Mammary epithelial cell (primary cell): ENCODE measurements at regions of chr15 and their contacts with region 1.

Region 1: DNA sequence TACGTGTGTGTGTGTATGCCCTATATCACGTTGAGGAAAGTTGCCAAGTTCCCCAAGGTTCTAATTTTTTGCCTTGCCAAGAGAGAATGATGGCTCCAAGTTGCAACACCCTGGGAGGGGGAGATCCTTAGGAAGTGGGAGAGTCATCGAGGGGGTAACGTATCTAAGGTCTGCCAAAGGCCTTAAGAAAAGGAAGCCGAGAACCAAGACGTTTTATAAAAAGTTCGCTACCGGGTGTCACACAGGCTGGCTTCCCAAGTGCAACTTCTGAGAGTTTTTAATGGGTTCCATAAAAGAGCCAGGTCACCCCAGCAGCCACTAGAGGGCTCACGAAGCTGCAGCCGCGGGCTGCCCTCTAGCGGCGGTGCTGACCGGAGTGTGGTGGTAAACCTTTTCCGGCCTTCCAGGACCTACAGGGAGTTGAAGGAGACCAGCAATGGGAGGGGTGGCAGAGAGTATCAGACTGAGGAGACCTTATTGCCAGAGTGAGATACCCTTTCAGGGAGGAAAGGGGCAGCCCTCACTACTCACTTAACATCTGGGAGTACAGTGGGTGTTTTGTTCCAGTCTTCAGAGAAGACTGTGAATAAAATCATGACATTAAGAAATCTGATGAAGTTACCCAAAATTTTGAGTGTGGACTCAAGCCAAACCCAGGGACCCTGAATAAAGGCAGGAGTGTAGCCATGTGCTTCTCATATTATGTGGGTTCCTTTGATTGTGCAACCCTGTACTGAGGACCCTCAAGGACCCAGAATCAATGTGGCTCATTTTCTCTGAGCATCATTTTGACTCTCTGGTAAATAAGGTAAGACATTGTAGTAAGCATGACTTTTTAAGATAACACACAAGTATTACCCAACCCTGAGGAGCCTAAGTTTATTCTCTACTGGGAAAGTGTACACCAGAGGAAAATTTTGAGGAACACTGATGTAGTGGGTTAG is 2.5 kb upstream of the RFX7 start:
- DNase-seq: peak; percentile 79
- H3K4me3 ChIP-seq: peak overlapping the region; percentile 27 to 43 (median 34)
- H3K27ac ChIP-seq: peak overlapping the region; percentile 19
- H3K4me1 ChIP-seq: peaks cover 17% of the 10 kb centered on the region
- H3K27me3 ChIP-seq: no peaks in the 10 kb centered on the region
- CTCF ChIP-seq: peak; percentile 100

Region 2: GRCh38 chr15:55917881-55918296 is 328.3 kb before region 1 on chr15:
- CTCF ChIA-PET with region 1: no interaction called
- dilution Hi-C with region 1: no loop called
- in situ Hi-C with region 1: no loop called
- intact Hi-C with region 1: loop called (anchors 5 kb)
- DNase-seq: peak; percentile 86
- H3K4me3 ChIP-seq: peak overlapping the region in 1 of 3 experiments; percentile 25
- H3K27ac ChIP-seq: peak overlapping the region; percentile 92
- H3K4me1 ChIP-seq: peaks cover 28% of the 10 kb centered on the region
- H3K27me3 ChIP-seq: no peaks in the 10 kb centered on the region
- CTCF ChIP-seq: peak; percentile 65 to 67

Region 3: DNA sequence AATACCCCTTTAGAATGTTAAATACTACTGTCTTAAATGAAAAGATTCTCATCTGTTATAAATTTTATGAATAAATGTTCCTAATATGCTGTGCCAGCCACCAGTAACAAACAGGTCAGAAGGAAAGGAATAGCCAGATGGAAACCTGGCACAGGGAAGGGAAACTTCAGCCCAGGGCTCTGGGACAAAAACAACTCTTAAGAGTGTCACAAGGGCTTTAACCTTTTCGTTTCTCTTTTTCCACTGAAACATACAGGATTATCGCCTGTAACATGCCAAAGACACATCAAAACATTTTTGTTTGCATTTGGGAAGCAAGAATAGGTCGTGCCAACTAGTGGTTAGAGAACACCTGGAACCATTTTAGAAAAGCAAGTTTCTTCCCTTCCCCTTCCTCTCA is 143.7 kb before region 1 on chr15:
- CTCF ChIA-PET with region 1: no interaction called
- dilution Hi-C with region 1: no loop called
- in situ Hi-C with region 1: no loop called
- intact Hi-C with region 1: loop called (anchors 5 kb)
- DNase-seq: no peak
- H3K4me3 ChIP-seq: no peak overlapping the region
- H3K27ac ChIP-seq: no peak overlapping the region
- H3K4me1 ChIP-seq: no peaks in the 10 kb centered on the region
- H3K27me3 ChIP-seq: no peaks in the 10 kb centered on the region
- CTCF ChIP-seq: no peak

Region 4: DNA sequence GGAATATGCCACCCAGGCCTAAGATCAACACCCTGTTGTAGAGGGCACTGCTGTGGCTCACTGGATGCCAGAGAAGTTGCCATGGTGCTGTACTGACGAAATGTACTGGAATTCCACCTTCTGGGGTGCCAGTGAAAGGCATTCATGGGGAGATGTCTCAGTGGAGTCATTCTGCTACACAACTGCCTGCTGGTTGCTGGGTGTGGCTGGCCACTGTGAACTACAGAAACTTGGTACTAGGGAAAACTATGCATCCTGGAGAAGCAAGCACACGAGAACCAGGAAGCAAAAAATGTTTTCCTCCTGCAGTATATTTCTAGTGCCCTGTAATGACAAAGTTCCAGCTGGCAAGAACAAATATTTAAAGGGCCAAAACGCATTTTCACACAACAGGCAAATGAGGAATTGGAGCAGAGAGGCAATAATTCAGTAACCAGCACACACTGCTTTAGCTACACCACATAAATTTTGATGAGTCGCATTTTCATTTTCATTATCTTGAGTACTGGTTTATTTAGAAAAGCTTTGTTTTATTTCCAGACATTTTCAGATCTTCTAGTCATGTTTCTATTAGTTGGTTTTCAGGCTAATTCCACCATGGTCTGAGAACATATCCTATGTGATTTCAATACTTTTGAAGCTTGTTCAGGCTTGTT is 15.8 kb after region 1 on chr15:
- CTCF ChIA-PET with region 1: interaction called, 16 read pairs
- dilution Hi-C with region 1: no loop called
- in situ Hi-C with region 1: no loop called
- intact Hi-C with region 1: no loop called
- DNase-seq: peak; percentile 74
- H3K4me3 ChIP-seq: no peak overlapping the region
- H3K27ac ChIP-seq: peak overlapping the region; percentile 12
- H3K4me1 ChIP-seq: no peaks in the 10 kb centered on the region
- H3K27me3 ChIP-seq: no peaks in the 10 kb centered on the region
- CTCF ChIP-seq: no peak

Region 5: DNA sequence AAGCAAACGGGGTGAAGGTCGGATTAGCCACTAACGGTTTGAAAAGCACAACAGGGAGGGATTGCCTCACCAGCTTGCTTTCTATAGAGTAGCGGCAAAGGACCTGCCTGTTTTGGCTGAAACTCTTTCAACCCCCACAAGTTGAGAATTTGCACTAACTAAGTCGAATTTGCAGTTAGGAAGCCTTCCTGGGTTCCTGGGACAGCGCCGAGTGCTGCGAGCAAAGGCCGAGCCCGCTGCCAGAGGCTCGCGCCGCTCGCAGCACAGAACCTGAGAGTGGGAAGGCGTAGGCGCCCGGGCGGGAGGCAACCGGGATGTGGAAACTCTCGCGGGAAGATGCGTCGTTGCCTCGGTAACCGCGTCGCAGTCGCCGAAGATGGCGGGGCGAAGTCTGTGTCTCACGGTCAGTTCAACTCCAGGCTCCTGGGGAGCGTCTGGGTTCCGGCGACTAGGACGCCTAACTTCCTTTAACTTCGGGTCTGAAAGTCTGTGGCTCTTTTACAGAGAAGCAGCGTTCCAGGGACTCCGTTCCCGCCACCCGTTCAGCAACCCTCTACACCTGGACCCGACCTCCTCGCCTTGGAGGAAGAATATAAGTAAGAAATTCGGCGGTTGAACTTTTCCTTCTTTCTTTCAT is 119.0 kb after region 1 on chr15 and contains the start of gene TEX9:
- CTCF ChIA-PET with region 1: no interaction called
- dilution Hi-C with region 1: no loop called
- in situ Hi-C with region 1: no loop called
- intact Hi-C with region 1: loop called (anchors 5 kb)
- DNase-seq: peak; percentile 82
- H3K4me3 ChIP-seq: peak within 1 kb of the TSS; percentile 53 to 70 (median 69)
- H3K27ac ChIP-seq: peak within 1 kb of the TSS; percentile 31
- H3K4me1 ChIP-seq: peaks cover 16% of the 10 kb centered on the region
- H3K27me3 ChIP-seq: no peaks in the 10 kb centered on the region
- CTCF ChIP-seq: no peak
- total RNA-seq, gene TEX9: 7.7 to 11.2 TPM